ENCODE measurements at regions of chrX and their contacts with region 1.

Region 1: DNA sequence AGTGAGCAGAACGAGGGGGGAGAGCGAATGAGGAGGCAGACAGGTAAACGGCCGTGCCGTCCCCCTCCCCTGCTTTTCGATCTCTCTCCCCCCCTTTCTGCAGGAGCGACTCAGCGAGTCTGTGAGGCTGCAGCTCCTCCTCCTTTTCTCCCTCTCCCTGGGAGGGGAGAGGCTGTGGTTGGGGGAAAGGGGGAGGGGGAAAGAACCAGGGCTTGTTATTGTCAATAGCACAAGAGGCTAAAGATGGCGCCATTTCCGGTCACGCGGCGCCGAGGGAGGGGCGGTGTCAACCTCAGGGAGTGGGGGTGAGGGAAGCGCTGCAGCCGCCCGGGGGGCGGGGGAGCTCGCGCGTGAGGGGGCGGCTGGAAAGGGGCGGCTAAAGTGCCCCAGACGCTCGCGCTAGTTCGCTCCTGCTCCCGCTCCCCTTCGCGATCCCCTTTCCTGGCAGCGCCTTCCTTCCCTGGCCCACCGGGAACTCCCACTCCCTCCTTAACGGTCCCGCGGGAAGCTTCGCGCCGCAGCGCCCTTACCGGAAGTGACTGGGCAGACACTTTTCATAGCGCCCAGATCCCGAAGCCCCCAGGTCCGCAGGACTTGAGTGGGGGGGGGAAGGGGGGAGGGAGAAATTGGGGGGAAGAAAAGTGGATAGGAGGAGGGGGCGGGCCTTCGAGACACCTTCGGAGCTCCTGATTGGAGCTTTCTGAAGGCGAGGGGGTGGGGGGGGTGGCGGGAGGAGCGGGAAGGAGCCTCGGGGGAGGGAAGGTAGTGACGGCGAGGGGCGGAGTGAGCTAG is at the start of gene CUL4B:
- DNase-seq: peak; percentile 96
- H3K4me3 Mint-ChIP-seq: peak within 1 kb of the TSS; percentile 98
- H3K27ac Mint-ChIP-seq: peak within 1 kb of the TSS; percentile 98
- H3K4me1 Mint-ChIP-seq: peaks cover 16% of the 10 kb centered on the region
- H3K27me3 Mint-ChIP-seq: no peaks in the 10 kb centered on the region
- total RNA-seq, gene CUL4B: 53.2 to 60.1 TPM

Region 2: GRCh38 chrX:119871599-119872395 is 689.2 kb before region 1 on chrX and contains the starts of genes NDUFA1 and RNF113A:
- CTCF ChIA-PET with region 1: no interaction called
- intact Hi-C with region 1: loop called (anchors 5 kb)
- DNase-seq: peak; percentile 86
- H3K4me3 Mint-ChIP-seq: peak within 1 kb of the TSS; percentile 97
- H3K27ac Mint-ChIP-seq: peak within 1 kb of the TSS; percentile 98
- H3K4me1 Mint-ChIP-seq: peaks cover 13% of the 10 kb centered on the region
- H3K27me3 Mint-ChIP-seq: no peaks in the 10 kb centered on the region
- total RNA-seq, gene NDUFA1: 105 to 107 TPM
- total RNA-seq, gene RNF113A: 20.8 to 22.0 TPM

Region 3: DNA sequence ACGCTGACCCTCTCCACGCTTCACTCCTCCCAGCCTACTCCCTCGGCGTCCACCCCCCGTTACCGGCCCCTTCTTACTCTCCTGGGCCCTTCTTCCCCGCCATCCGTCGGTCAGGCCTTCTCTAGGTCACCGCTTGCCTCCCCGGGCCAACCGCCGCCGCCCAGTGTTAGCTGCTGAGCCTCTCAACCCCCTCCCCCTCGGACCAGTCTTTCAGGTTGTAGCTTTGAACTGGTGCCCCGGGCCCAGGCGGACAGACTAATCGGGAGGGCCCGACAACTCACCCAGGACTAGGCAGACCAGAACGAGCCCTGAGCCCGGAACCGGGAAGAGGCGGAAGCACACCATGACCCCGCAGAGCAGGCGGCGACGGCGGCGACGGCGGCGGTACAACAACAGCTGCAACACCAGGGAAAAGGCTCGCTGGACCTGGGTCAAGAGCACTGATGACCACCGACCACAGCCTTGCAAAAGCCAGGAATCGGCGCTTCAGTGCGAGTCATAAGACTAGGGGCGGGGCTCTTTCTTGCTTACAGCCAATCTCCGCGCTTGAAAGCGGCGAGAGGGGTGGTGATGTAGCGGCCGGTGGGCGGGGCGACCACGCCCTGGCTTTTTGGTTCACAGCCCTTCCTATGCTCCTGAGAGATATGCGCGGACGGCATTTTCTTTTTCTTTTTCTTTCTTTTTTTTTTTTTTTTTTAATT is 92.1 kb before region 1 on chrX and contains the start of gene LAMP2:
- CTCF ChIA-PET with region 1: no interaction called
- intact Hi-C with region 1: loop called (anchors 5 kb)
- DNase-seq: peak; percentile 87
- H3K4me3 Mint-ChIP-seq: peak within 1 kb of the TSS; percentile 86
- H3K27ac Mint-ChIP-seq: peak within 1 kb of the TSS; percentile 91
- H3K4me1 Mint-ChIP-seq: peaks cover 15% of the 10 kb centered on the region
- H3K27me3 Mint-ChIP-seq: no peaks in the 10 kb centered on the region
- total RNA-seq, gene LAMP2: 37.9 to 38.0 TPM

Region 4: DNA sequence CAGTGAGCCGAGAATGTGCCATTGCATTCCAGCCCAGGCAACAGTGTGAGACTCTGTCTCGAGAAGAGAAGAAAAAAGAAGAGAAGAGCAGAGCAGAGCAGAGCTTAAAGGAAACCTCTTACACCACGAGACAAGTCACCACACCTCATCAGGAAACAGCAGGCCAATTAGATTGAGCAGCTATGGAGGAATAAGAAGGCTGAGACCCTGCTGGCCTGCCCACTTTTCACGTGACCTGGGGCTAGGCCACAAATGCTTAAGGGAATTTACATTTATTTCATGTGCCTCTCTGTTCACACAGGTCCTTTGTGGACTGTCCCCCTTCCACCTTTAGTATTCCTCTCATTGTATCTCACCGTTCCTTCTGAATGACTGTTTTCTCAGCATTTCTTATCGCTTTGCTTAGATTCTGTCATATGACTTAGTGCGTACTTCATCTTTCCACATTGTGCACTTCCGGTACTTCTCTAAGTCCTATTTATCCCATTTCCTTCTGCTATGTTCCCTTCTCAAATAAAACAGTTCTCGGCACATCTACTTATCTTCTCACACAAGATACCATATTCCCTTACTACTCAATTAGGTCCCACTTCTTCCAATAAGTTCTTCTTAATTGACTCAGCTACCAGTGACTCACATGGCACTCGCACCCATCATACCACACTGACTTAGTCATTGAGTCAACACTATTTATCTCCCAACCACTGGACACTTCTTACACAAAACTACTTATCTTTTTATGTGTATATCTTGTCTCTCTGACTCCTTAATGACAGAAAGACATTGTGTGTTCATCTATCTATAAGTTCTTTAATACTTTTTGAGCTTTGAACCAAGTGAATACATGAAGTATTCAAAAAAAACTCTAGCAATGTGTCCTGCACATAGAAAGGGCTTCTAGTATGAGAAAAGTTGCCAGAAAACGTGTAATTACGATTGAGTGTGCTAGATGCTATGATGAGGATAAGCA is 11.3 kb before region 1 on chrX:
- CTCF ChIA-PET with region 1: no interaction called
- intact Hi-C with region 1: loop called (anchors 1 kb)
- DNase-seq: peak; percentile 56
- H3K4me3 Mint-ChIP-seq: no peak overlapping the region
- H3K27ac Mint-ChIP-seq: peak overlapping the region; percentile 32
- H3K4me1 Mint-ChIP-seq: peaks cover 26% of the 10 kb centered on the region
- H3K27me3 Mint-ChIP-seq: no peaks in the 10 kb centered on the region

Region 5: DNA sequence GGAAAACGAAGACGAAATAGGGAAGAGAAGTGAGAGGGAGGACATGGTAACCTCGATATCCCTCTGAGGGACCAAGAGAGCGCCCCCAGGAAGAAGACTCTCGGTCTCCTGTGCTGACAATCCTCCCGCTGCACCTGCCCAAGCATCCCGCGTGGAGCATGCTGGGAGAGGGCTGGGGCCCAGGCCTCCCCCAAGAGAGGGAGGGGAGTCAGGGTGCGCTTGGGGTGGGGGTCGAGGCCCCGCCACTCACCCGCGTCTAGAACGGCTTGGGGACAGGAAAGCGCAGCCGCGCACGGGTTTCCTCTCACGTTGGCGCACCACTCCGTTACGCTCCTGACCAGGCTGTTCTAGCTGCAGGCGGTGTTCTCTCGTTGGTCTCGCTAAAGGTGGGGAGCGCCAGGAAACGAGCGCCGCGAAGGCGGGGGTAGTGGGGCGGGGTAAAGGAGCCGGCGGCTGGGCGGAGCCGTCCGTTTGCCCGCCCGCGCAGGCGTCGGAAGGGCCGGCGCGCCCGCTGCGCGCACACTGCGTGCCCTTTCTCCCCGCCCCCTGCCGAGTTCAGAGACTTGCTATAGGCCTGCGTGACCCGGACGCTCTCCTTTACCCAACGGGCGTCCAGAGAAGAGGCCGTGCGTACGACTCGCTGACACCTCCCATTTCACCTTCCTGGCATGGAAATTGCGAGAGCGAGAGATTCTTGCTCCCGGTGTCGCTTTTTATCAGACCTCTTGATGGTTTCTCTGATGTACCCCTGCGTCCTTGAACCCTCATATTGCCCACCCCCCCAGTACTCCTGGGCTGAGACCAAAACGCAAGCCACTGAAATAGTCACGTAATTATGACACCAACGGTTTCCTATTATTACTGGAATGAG is 68.9 kb after region 1 on chrX and contains the start of gene C1GALT1C1:
- CTCF ChIA-PET with region 1: no interaction called
- intact Hi-C with region 1: loop called (anchors 1 kb)
- DNase-seq: peak; percentile 92
- H3K4me3 Mint-ChIP-seq: peak within 1 kb of the TSS; percentile 96
- H3K27ac Mint-ChIP-seq: peak within 1 kb of the TSS; percentile 99
- H3K4me1 Mint-ChIP-seq: peaks cover 26% of the 10 kb centered on the region
- H3K27me3 Mint-ChIP-seq: no peaks in the 10 kb centered on the region
- total RNA-seq, gene C1GALT1C1: 11.7 TPM

Region 6: GRCh38 chrX:120755066-120755846 is 194.2 kb after region 1 on chrX:
- CTCF ChIA-PET with region 1: no interaction called
- intact Hi-C with region 1: loop called (anchors 2 kb)
- DNase-seq: peak; percentile 40
- H3K4me3 Mint-ChIP-seq: no peak overlapping the region
- H3K27ac Mint-ChIP-seq: peak overlapping the region; percentile 67
- H3K4me1 Mint-ChIP-seq: peaks cover 45% of the 10 kb centered on the region
- H3K27me3 Mint-ChIP-seq: no peaks in the 10 kb centered on the region